ENCODE measurements at regions of chr18 and their contacts with region 1.

Region 1: GRCh38 chr18:11669271-11669947 is 19.7 kb upstream of the GNAL start:
- DNase-seq: no peak
- H3K4me3 ChIP-seq: no peak overlapping the region
- H3K27me3 ChIP-seq: no peaks in the 10 kb centered on the region; the same call in 1 of the 2 replicates
- CTCF ChIP-seq: no peak

Region 2: GRCh38 chr18:11654736-11655605 is 14.4 kb before region 1 on chr18:
- CTCF ChIA-PET with region 1: interaction called, 16 read pairs
- POLR2A ChIA-PET with region 1: no interaction called
- DNase-seq: no peak
- H3K4me3 ChIP-seq: no peak overlapping the region
- H3K27me3 ChIP-seq: peaks cover 3% of the 10 kb centered on the region; the same call in 1 of the 2 replicates
- CTCF ChIP-seq: peak; percentile 77